ENCODE measurements at regions of chr12 and their contacts with region 1.

Region 1: GRCh38 chr12:22974865-22975264 is 349.9 kb downstream of the ETNK1 start:
- DNase-seq: no peak
- H3K4me3 ChIP-seq: no peak overlapping the region
- H3K27ac ChIP-seq: no peak overlapping the region
- H3K4me1 ChIP-seq: no peaks in the 10 kb centered on the region
- H3K27me3 ChIP-seq: no peaks in the 10 kb centered on the region
- CTCF ChIP-seq: no peak
- EP300 ChIP-seq: no peak
- POLR2A ChIP-seq: no peak

Region 2: DNA sequence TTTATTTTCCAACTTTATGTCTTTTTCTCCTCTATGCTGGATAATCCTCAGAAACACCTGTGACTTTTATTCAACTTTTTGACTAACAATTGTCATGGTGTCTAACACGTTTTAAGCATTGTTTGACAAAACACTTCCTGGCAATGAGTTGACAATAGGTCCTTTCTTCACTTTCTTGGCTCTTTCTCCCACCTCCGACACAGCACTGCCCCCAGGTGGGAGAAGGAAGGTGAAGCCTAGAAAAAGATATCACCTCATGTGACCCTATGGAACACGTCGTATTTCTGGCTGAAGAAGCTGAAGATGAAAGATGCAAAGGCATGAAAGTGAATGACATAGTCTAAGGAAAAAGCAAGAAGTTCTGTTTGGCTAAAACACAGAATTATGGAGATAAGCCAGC is 80.1 kb after region 1 on chr12:
- in situ Hi-C with region 1: loop called in 1 of 4 experiments (anchors 25 kb)
- intact Hi-C with region 1: no loop called
- DNase-seq: peak; percentile 8
- H3K4me3 ChIP-seq: no peak overlapping the region
- H3K27ac ChIP-seq: no peak overlapping the region
- H3K4me1 ChIP-seq: no peaks in the 10 kb centered on the region
- H3K27me3 ChIP-seq: no peaks in the 10 kb centered on the region
- CTCF ChIP-seq: peak in 2 of 5 experiments; percentile 17 to 26
- EP300 ChIP-seq: no peak
- POLR2A ChIP-seq: no peak